Kidney (tissue), 22 donors: ENCODE measurements at regions of chr17 and their contacts with region 1.

Region 1: GRCh38 chr17:48543107-48543853 is 1.6 kb downstream of the HOXB2 start:
- DNase-seq: peak in 4 of 5 donors; percentile 51 to 74 (median 65)
- H3K4me3 ChIP-seq: peak overlapping the region; percentile 85 to 89 (median 86)
- H3K27ac ChIP-seq: peak overlapping the region; percentile 95 to 96
- H3K4me1 ChIP-seq: peaks cover 7 to 29% (median 25%) of the 10 kb centered on the region in 3 donors
- H3K27me3 ChIP-seq: no peaks in the 10 kb centered on the region
- CTCF ChIP-seq: no peak

Region 2: DNA sequence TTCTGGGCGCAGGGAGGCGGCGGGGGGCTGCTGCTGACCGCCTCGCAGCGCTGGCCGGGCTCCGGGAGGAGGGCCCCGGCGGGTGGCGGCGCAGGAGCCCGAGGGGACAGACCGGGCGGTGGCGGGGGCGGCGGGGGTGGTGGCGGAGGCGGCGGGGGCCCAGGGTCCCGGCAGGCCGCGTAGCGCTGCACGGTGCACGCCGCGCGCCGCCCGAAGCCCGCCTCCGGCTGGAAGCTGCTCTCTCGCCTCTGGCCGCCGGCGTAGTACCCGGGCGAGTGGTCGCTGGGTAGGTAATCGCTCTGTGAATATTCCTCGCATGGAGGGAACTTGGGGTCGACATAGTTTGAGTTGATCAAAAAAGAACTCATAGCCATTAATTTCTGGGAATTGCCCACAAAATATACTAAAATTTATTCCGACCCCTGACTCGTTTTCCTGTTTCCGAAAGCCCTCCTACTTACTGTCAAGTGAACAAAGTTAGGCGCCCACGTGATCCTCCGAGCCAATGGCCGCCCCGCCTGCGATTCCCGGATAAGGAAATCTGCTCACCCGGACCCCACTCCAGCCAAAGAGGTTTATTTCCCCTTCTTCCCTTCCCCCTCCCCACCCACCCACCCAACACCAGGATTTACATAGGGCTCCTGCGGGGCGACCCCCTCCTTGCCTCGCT is 34.8 kb after region 1 on chr17 and contains the start of gene HOXB4:
- intact Hi-C with region 1: loop called (anchors 5 kb)
- DNase-seq: peak; percentile 93 to 95 (median 94)
- H3K4me3 ChIP-seq: peak within 1 kb of the TSS; percentile 68 to 77 (median 71)
- H3K27ac ChIP-seq: peak within 1 kb of the TSS; percentile 95 to 97
- H3K4me1 ChIP-seq: peaks cover 2 to 19% (median 5%) of the 10 kb centered on the region in 3 donors
- H3K27me3 ChIP-seq: no peaks in the 10 kb centered on the region
- CTCF ChIP-seq: no peak
- total RNA-seq, gene HOXB4: 22.6 TPM

Region 3: GRCh38 chr17:48655913-48656312 is 112.6 kb after region 1 on chr17:
- intact Hi-C with region 1: no loop called
- DNase-seq: peak in 1 of 5 donors; percentile 10
- H3K4me3 ChIP-seq: no peak overlapping the region
- H3K27ac ChIP-seq: no peak overlapping the region
- H3K4me1 ChIP-seq: no peaks in the 10 kb centered on the region
- H3K27me3 ChIP-seq: no peaks in the 10 kb centered on the region
- CTCF ChIP-seq: no peak